ENCODE measurements at regions of chr3 and their contacts with region 1.

Region 1: GRCh38 chr3:11096266-11097135 is 57.8 kb upstream of the HRH1 start:
- DNase-seq: peak; percentile 55 to 75
- H3K4me3 ChIP-seq: peak overlapping the region; percentile 53
- H3K27ac ChIP-seq: peak overlapping the region; percentile 54; the same call in 1 of the 2 replicates
- H3K4me1 ChIP-seq: peaks cover 13% of the 10 kb centered on the region
- H3K27me3 ChIP-seq: no peaks in the 10 kb centered on the region
- CTCF ChIP-seq: no peak

Region 2: GRCh38 chr3:11116336-11117059 is 20.0 kb after region 1 on chr3:
- CTCF ChIA-PET with region 1: no interaction called
- POLR2A ChIA-PET with region 1: no interaction called
- intact Hi-C with region 1: loop called (anchors 2 kb)
- DNase-seq: no peak
- H3K4me3 ChIP-seq: no peak overlapping the region
- H3K27ac ChIP-seq: no peak overlapping the region
- H3K4me1 ChIP-seq: no peaks in the 10 kb centered on the region
- H3K27me3 ChIP-seq: no peaks in the 10 kb centered on the region
- CTCF ChIP-seq: no peak

Region 3: GRCh38 chr3:11195721-11196332 is 99.3 kb after region 1 on chr3:
- CTCF ChIA-PET with region 1: no interaction called
- POLR2A ChIA-PET with region 1: no interaction called
- intact Hi-C with region 1: no loop called
- DNase-seq: no peak
- H3K4me3 ChIP-seq: no peak overlapping the region
- H3K27ac ChIP-seq: peak overlapping the region; percentile 42
- H3K4me1 ChIP-seq: peaks cover 12% of the 10 kb centered on the region
- H3K27me3 ChIP-seq: no peaks in the 10 kb centered on the region
- CTCF ChIP-seq: no peak

Measured in PC-9 (cell line).